IMR-90 (cell line): ENCODE measurements at regions of chr11 and their contacts with region 1.

Region 1: GRCh38 chr11:105208019-105208418 is 68.5 kb upstream of the CARD18 start:
- DNase-seq: no peak
- ATAC-seq: no peak
- H3K4me3 ChIP-seq: no peak overlapping the region
- H3K27ac ChIP-seq: no peak overlapping the region
- H3K4me1 ChIP-seq: no peaks in the 10 kb centered on the region
- H3K27me3 ChIP-seq: no peaks in the 10 kb centered on the region
- CTCF ChIP-seq: no peak
- POLR2A ChIP-seq: no peak
- RAD21 ChIP-seq: no peak

Region 2: DNA sequence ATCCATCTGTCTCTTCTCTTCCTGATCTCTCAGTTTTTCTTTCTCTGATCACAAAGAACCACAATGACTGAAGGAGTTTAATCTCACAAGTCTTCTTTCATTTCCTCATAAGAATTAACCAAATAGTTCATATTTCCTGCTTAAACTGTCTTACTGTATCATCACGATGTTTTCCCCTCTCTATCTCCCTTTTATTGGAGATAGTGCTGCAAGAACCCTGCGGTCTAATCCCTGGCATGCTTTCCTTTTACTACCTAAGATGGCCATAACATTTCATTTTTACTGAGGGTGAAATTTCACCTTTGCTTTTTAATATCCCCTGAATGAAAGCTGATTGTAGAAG is 97.4 kb before region 1 on chr11:
- CTCF ChIA-PET with region 1: no interaction called
- POLR2A ChIA-PET with region 1: no interaction called
- dilution Hi-C with region 1: no loop called
- in situ Hi-C with region 1: no loop called
- intact Hi-C with region 1: no loop called
- DNase-seq: no peak
- ATAC-seq: no peak; the same call in 1 of the 2 replicates
- H3K4me3 ChIP-seq: no peak overlapping the region
- H3K27ac ChIP-seq: no peak overlapping the region
- H3K4me1 ChIP-seq: peaks cover 6% of the 10 kb centered on the region
- H3K27me3 ChIP-seq: no peaks in the 10 kb centered on the region
- CTCF ChIP-seq: no peak
- POLR2A ChIP-seq: no peak
- RAD21 ChIP-seq: no peak

Region 3: GRCh38 chr11:105220121-105220520 is 12.1 kb after region 1 on chr11:
- CTCF ChIA-PET with region 1: interaction called, 3 read pairs
- POLR2A ChIA-PET with region 1: no interaction called
- dilution Hi-C with region 1: no loop called
- in situ Hi-C with region 1: no loop called
- intact Hi-C with region 1: loop called (anchors 2 kb)
- DNase-seq: no peak
- ATAC-seq: no peak
- H3K4me3 ChIP-seq: no peak overlapping the region
- H3K27ac ChIP-seq: no peak overlapping the region
- H3K4me1 ChIP-seq: peaks cover 2% of the 10 kb centered on the region; the same call in 1 of the 2 replicates
- H3K27me3 ChIP-seq: no peaks in the 10 kb centered on the region
- CTCF ChIP-seq: no peak
- POLR2A ChIP-seq: no peak
- RAD21 ChIP-seq: no peak

Region 4: GRCh38 chr11:105466582-105467228 is 258.7 kb after region 1 on chr11:
- CTCF ChIA-PET with region 1: no interaction called
- POLR2A ChIA-PET with region 1: no interaction called
- dilution Hi-C with region 1: no loop called
- in situ Hi-C with region 1: no loop called
- intact Hi-C with region 1: no loop called
- DNase-seq: peak; percentile 85
- ATAC-seq: no peak; the same call in 1 of the 2 replicates
- H3K4me3 ChIP-seq: no peak overlapping the region
- H3K27ac ChIP-seq: no peak overlapping the region
- H3K4me1 ChIP-seq: no peaks in the 10 kb centered on the region
- H3K27me3 ChIP-seq: no peaks in the 10 kb centered on the region
- CTCF ChIP-seq: no peak
- POLR2A ChIP-seq: no peak
- RAD21 ChIP-seq: no peak